Activated B cell treated with CpG ODN at 0.5 μM for 24 hours (primary cell): ENCODE measurements at regions of chr19 and their contacts with region 1.

Region 1: DNA sequence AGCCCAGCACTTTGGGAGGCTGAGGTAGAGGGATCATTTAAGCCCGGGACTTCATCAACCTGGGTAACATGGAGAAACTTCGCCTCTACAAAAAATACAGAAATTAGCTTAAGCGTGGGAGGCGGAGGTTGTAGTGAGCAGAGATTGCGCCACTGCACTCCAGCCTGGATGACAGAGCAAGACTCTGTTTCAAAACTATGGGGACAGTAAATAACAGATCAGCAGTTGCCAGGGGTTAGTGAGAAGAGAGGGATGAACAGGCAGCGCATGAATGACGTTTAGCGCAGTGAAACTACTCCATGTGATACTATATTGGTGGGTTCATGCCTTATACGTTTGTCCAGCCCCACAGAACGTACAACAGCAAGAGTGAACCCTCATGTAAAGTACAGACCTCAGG is 7.1 kb upstream of the ICAM3 start:
- DNase-seq: no peak
- ATAC-seq: no peak
- H3K4me3 Mint-ChIP-seq: no peak overlapping the region
- H3K27ac Mint-ChIP-seq: no peak overlapping the region
- H3K4me1 Mint-ChIP-seq: no peaks in the 10 kb centered on the region
- H3K27me3 Mint-ChIP-seq: no peaks in the 10 kb centered on the region
- CTCF ChIP-seq: no peak

Region 2: DNA sequence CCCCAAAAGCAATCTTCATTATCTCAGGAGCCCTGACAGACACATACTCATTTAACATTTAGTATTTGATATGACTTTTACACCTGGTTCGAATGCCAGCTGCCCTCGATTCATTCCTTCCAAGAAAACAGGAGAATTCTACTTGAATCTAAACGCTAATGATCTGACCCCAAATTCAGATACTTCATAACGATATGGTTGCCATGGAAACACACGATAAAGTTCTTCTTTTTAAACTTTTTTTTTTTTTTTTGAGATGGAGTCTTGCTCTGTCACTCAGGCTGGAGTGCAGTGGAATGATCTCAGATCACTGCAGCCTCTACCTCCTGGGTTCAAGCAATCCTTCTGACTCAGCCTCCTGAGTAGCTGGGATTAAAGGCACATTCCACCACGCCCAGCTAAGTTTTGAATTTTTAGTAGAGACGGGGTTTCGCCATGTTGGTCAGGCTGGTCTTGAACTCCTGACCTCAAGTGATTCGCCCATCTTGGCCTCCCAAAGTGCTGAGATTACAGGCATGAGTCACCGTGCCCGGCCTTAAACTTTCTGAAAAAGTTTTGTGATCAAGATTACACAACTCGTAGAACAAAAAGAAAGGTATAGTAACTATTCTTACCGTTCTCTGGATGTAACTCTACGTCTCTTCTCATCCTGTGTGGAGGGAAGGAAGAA is 173.1 kb before region 1 on chr19:
- CTCF ChIA-PET with region 1: no interaction called
- POLR2A ChIA-PET with region 1: no interaction called
- intact Hi-C with region 1: no loop called
- DNase-seq: no peak
- ATAC-seq: no peak
- H3K4me3 Mint-ChIP-seq: no peak overlapping the region
- H3K27ac Mint-ChIP-seq: no peak overlapping the region
- H3K4me1 Mint-ChIP-seq: no peaks in the 10 kb centered on the region
- H3K27me3 Mint-ChIP-seq: no peaks in the 10 kb centered on the region
- CTCF ChIP-seq: no peak

Region 3: GRCh38 chr19:10321874-10322835 is 24.4 kb before region 1 on chr19:
- CTCF ChIA-PET with region 1: no interaction called
- POLR2A ChIA-PET with region 1: interaction called, 10 read pairs
- intact Hi-C with region 1: no loop called
- DNase-seq: no peak
- ATAC-seq: no peak
- H3K4me3 Mint-ChIP-seq: no peak overlapping the region
- H3K27ac Mint-ChIP-seq: no peak overlapping the region
- H3K4me1 Mint-ChIP-seq: no peaks in the 10 kb centered on the region
- H3K27me3 Mint-ChIP-seq: no peaks in the 10 kb centered on the region
- CTCF ChIP-seq: no peak

Region 4: DNA sequence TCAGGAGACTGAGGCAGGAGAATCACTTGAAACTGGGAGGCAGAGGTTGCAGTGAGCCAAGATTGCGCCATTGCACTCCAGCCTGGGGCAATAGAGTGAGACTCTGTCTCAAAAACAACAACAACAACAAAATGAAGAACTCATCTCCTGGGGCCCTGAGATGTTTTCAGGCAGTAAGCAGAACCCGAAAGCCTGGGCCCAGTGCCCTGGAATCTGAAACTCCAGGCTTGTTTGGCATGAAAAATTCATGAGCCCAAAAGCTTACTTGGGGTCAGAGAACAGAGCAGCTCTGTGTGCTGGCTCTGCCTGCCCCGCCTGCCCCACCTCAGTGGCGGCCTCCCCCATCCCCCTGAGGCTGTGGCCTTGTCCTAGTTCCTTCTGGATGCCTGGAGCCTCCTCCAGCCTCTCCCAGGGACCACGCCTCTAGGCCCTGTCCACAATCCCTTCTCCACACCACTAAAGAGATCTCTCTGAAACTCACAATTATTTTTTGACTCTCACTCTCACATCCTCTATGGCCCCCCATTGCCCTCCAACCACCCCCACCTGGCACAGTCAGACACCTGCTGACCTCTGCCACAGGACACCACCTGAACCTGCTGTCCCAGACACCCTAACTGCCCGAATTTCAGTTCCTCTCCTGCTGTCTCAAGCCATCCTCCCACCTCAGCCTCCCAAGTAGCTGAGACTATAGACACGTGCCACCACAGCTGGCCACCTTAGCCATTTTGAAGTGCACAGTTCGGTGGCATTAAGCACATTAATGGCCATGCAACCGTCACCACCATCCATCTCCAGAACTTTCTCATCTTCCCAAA is 247.5 kb after region 1 on chr19:
- CTCF ChIA-PET with region 1: no interaction called
- POLR2A ChIA-PET with region 1: no interaction called
- intact Hi-C with region 1: no loop called
- DNase-seq: no peak
- ATAC-seq: peak; percentile 51
- H3K4me3 Mint-ChIP-seq: peak overlapping the region; percentile 58
- H3K27ac Mint-ChIP-seq: peak overlapping the region; percentile 74
- H3K4me1 Mint-ChIP-seq: peaks cover 39% of the 10 kb centered on the region
- H3K27me3 Mint-ChIP-seq: no peaks in the 10 kb centered on the region
- CTCF ChIP-seq: no peak